ENCODE measurements at regions of chr20 and their contacts with region 1.

Region 1: DNA sequence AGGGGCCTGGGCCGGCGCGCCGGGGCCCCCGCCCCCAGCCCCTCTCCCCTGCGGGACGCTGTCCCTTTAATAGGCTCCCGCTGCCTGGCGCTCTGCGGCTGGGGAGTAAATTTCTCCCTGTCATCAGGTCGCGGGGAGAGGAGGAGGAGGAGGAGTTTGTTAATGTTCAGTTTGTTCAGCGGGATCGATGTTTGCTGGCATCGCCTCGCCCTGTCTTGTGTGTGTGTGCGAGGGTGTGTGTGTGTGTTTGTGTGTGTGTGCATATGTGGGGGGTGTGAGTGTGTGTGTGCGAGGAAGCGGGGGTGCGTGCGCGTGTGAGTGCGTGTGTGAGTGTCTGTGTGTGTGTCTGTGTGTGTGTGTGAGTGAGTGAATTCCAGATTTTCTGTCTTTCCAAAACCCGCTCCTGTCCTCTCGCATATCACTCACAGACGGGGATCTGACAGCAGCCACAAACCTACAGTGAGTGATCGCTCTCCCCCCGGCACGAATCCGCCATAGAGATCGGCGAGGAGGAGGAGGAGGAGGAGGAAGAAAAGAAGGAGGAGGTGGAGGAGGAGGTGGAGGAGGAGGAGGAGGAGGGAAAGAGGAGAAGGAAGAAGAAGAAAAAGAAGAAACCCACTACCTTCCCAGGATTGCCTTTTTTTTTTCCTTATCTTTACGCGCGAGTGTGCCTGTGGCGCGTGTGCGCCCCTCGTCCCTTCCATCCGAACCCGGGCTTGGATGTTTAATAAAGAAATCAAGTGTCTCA is at the start of gene TSHZ2:
- DNase-seq: peak; percentile 73
- H3K4me3 Mint-ChIP-seq: peak within 1 kb of the TSS; percentile 94
- H3K27ac Mint-ChIP-seq: peak within 1 kb of the TSS; percentile 98
- H3K4me1 Mint-ChIP-seq: peaks cover 34% of the 10 kb centered on the region
- H3K27me3 Mint-ChIP-seq: no peaks in the 10 kb centered on the region
- total RNA-seq, gene TSHZ2: 34.1 to 37.8 TPM

Region 2: GRCh38 chr20:52494244-52494643 is 478.1 kb before region 1 on chr20:
- CTCF ChIA-PET with region 1: no interaction called
- intact Hi-C with region 1: loop called (anchors 5 kb)
- DNase-seq: peak; percentile 82
- H3K4me3 Mint-ChIP-seq: peak overlapping the region; percentile 46
- H3K27ac Mint-ChIP-seq: peak overlapping the region; percentile 50
- H3K4me1 Mint-ChIP-seq: peaks cover 23% of the 10 kb centered on the region
- H3K27me3 Mint-ChIP-seq: no peaks in the 10 kb centered on the region

Region 3: DNA sequence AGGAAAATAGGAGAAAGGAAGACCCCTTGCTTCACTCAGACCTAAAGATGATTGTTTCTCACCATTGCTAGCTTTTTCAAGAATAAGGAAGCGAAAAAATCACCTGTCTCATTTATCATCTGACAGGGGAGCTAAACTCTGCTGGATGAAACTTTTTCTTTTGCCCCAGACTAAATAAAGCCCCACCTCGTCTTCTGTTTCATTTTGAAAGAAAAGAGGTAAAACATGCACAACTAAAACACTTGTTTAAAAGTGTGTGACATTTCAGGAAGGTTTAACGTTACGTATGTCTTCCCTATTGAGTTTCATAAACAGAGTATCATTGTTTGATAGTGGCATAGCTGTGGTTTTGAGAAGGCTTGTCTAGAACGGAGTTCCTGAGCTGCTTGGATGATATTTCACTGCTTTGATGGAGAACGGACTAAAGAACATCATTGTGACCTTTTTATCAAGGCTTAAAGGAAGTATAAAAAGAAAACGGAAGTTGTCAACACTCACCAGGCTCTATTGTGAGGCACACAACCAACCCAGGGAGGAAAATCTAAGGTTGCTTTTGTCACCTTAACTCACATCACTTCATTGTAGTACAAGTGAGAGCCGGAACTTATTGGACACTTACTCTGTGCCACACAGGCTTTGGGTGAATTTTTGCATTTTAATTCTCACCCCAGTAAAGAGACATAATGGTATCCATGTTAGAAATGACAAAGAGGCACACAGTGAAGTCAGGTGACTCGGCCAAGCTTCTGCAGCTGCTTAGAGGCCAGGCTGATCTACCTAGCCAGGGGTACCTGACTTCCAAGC is 29.3 kb after region 1 on chr20:
- CTCF ChIA-PET with region 1: interaction called, 7 read pairs
- intact Hi-C with region 1: loop called (anchors 1 kb)
- DNase-seq: peak; percentile 60
- H3K4me3 Mint-ChIP-seq: peak overlapping the region; percentile 71
- H3K27ac Mint-ChIP-seq: peak overlapping the region; percentile 99
- H3K4me1 Mint-ChIP-seq: peaks cover 88% of the 10 kb centered on the region
- H3K27me3 Mint-ChIP-seq: no peaks in the 10 kb centered on the region

Region 4: DNA sequence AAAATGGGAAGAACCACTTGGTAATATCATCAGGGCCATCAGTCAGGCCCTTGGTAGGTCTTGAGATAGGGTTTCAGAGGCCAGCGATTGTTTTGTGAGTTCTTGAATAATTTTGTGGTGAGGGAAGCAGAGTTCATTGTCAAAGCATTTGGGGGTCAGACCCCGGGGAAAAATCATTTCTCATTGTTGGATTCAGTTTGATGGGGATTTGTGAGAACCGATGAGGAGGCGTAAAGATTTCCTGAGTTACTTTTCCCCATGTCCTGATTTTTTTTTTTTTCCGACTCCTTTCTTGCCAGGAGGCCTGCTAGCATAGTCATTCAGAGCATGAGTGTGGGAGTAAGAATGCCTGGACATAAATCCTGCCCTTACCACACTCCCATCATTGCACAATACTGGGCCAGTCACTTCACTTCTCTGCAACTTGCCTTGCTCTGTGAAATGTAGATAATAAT is 60.1 kb after region 1 on chr20:
- CTCF ChIA-PET with region 1: interaction called, 3 read pairs
- intact Hi-C with region 1: loop called (anchors 1 kb)
- DNase-seq: no peak
- H3K4me3 Mint-ChIP-seq: no peak overlapping the region
- H3K27ac Mint-ChIP-seq: no peak overlapping the region
- H3K4me1 Mint-ChIP-seq: peaks cover 70% of the 10 kb centered on the region
- H3K27me3 Mint-ChIP-seq: no peaks in the 10 kb centered on the region

Region 5: DNA sequence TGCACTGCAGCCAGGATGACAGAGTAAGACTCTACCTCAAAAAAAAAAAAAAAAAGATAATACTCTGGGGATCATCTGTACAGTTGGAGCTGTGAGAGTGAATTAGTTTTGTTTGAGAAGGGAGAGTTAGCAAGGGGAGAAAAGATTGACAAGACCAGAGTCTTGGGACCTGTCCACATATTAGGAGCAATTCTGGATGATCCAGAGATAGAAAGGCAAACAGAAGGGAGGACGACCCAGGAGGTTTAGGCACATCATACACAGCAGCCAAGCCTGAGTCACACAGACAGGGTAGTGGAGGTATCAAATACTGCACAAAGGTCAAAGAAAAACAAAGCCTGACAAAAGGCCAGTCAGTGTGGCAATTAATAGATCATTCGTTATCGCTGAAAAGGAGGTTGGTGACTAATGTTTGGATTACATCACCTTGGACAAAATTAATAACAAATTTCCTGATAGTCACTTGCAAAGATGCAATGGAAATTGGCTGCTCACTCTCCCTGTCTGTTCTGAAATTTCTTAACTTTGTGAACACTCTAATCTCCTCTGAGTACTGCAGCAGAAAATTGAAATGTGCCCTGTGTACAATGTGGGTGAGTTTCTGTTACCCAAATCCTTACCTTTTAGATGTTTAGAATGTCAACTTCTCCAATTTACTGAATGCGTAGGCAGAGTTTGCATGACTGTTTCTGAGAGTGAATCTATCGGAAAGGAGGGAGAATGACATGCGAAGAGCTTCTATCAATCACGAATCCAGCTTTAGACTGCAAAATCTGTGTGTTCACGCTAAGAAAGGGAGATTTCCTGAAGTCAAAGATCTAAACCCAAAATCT is 105.2 kb after region 1 on chr20:
- CTCF ChIA-PET with region 1: interaction called, 3 read pairs
- intact Hi-C with region 1: loop called (anchors 1 kb)
- DNase-seq: peak; percentile 59
- H3K4me3 Mint-ChIP-seq: no peak overlapping the region
- H3K27ac Mint-ChIP-seq: no peak overlapping the region
- H3K4me1 Mint-ChIP-seq: peaks cover 46% of the 10 kb centered on the region
- H3K27me3 Mint-ChIP-seq: no peaks in the 10 kb centered on the region

Region 6: DNA sequence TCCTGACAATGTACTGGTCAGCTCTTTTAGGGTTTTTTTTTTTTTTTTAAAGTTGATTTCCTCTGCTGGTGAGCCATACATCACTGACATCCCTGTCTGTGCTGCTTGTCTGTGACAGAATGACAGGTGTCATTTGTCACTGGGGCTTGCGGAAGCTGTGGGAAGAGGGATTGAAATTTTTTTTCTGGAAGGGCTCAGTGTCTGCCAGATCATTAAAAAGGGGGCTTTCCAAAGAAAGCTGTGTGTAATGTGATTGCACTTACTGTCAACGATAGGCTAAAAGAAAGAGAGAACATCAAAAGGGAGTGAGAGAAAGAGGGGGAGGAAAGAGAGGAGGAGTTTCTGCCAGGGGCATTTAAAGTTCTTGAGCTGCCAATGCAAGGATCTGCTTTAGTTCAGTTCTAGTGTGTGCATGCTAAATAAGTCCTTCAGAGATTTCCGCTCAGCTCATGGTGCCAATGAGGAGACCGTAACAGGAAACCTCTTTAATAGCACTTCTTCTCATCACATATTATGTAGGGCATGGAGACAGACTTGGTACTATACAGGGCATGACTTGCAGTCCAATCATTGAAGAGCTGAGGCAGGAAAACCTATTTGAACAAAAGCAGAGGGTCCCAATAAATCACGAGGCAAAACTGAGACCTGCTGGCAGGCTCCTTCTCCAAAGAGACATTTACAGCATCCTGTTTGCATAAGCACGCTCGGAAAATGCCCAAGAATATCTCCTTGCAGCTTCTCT is 177.0 kb after region 1 on chr20:
- CTCF ChIA-PET with region 1: interaction called, 3 read pairs
- intact Hi-C with region 1: loop called (anchors 1 kb)
- DNase-seq: no peak
- H3K4me3 Mint-ChIP-seq: peak overlapping the region; percentile 37
- H3K27ac Mint-ChIP-seq: peak overlapping the region; percentile 73
- H3K4me1 Mint-ChIP-seq: peaks cover 77% of the 10 kb centered on the region
- H3K27me3 Mint-ChIP-seq: no peaks in the 10 kb centered on the region